ENCODE measurements at regions of chr22 and their contacts with region 1.

Region 1: GRCh38 chr22:35840302-35840739 is 122.6 kb downstream of the APOL5 start:
- DNase-seq: peak; percentile 74
- H3K4me3 ChIP-seq: peak overlapping the region; percentile 74
- H3K27ac ChIP-seq: peak overlapping the region; percentile 67
- H3K4me1 ChIP-seq: peaks cover 81% of the 10 kb centered on the region
- CTCF ChIP-seq: no peak

Region 2: GRCh38 chr22:35785181-35785923 is 55.0 kb before region 1 on chr22:
- CTCF ChIA-PET with region 1: no interaction called
- POLR2A ChIA-PET with region 1: no interaction called
- intact Hi-C with region 1: loop called (anchors 10 kb)
- DNase-seq: no peak
- H3K4me3 ChIP-seq: no peak overlapping the region
- H3K27ac ChIP-seq: no peak overlapping the region
- H3K4me1 ChIP-seq: peaks cover 15% of the 10 kb centered on the region
- CTCF ChIP-seq: no peak

Region 3: DNA sequence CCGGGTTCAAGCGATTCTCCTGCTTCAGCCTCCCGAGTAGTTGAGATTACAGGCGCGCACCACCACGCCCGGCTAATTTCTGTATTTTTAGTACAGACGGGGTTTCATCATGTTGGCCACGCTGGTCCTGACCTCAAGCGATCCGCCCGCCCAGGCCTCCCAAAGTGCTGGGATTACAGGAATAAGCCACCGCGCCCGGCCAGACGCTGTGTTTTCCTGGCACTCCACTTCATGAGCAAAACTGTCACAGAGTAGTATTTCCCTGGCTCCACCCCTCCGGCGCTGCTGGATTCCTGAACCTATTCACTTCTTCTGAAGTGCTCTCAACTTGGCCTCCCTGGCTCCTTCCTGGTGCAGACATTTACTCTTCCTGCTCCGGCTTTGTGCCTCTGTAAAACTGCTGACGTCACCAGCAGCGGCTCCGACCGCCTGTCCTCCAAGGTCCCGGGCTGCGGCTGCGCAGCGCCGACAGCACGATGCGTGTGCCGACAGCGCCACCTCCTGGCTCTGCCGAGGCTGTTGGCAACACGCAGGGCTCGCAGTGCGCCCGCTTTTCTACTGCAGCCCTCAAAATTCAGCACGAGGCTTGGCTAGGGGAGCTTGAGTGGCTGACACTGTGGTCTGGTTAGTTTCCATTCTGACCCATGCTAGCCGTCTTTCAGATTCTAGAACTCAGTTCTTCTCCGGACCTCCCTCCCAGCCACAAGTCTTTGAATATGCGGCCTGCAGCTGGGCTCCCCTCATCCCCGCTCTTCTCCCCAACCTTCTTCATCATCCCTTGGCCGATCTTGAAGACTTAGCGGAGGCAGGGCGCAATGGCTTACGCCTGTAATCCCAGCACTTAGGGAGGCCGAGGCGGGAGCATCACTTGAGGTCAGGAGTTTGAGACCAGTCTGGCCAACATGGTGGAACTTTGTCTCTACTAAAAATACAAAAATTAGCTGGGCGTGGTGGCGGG is 283.6 kb after region 1 on chr22:
- CTCF ChIA-PET with region 1: interaction called, 3 read pairs
- POLR2A ChIA-PET with region 1: no interaction called
- intact Hi-C with region 1: loop called (anchors 2 kb)
- DNase-seq: peak; percentile 95
- H3K4me3 ChIP-seq: no peak overlapping the region
- H3K27ac ChIP-seq: no peak overlapping the region
- H3K4me1 ChIP-seq: peaks cover 3% of the 10 kb centered on the region
- CTCF ChIP-seq: peak; percentile 99

Region 4: DNA sequence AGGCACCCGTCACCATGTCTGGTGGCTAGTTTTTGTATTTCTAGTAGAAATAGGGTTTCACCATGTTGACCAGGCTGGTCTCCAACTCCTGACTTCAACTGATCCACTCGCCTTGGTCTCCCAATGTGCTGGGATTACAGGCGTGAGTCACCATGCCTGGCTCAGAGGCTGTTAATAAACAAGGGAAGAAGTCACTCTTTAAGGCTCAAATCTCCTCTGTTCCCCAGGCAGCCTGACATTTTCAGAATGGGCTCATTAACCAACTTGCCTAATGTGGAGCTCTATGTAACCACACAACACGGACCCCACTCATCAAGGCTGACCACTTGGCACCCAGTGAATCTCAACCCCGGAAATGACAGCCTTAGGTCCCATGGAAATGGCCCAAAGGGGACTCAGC is 296.2 kb after region 1 on chr22:
- CTCF ChIA-PET with region 1: no interaction called
- POLR2A ChIA-PET with region 1: no interaction called
- intact Hi-C with region 1: no loop called
- DNase-seq: no peak
- H3K4me3 ChIP-seq: no peak overlapping the region
- H3K27ac ChIP-seq: no peak overlapping the region
- H3K4me1 ChIP-seq: no peaks in the 10 kb centered on the region
- CTCF ChIP-seq: no peak